GM10248 (cell line): ENCODE measurements at regions of chr2 and their contacts with region 1.

Region 1: GRCh38 chr2:174312581-174313234 is 22.0 kb upstream of the SP9 start:
- DNase-seq: no peak
- CTCF ChIP-seq: no peak

Region 2: GRCh38 chr2:173884025-173884802 is 428.5 kb before region 1 on chr2:
- CTCF ChIA-PET with region 1: no interaction called
- POLR2A ChIA-PET with region 1: no interaction called
- DNase-seq: no peak
- CTCF ChIP-seq: peak; percentile 40

Region 3: GRCh38 chr2:174326161-174327020 is 13.7 kb after region 1 on chr2:
- CTCF ChIA-PET with region 1: interaction called, 10 read pairs
- POLR2A ChIA-PET with region 1: no interaction called
- DNase-seq: no peak
- CTCF ChIP-seq: no peak